Calu3 (cell line): ENCODE measurements at regions of chrX and their contacts with region 1.

Region 1: DNA sequence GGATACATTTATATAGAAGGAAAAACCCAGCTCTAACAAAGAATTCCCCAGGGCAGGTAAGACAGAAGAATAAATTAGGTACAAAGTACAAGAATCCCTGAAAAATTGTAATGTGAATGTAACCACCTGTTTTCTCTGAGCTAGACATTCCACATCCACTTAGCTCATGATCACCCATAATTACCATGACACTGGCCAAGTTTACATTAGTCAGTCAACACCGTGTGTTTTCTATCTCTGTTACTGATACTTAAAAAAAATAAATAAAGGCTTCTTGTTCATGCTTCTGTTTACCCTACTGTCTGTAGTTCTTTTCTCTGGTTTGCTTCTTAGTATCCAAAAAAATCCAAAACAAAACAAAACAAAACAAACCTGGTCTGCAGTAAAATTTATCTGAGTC is 66.0 kb downstream of the CBLL2 start:
- DNase-seq: no peak
- H3K4me3 Mint-ChIP-seq: no peak overlapping the region
- H3K27ac Mint-ChIP-seq: no peak overlapping the region
- H3K4me1 Mint-ChIP-seq: no peaks in the 10 kb centered on the region
- H3K27me3 Mint-ChIP-seq: no peaks in the 10 kb centered on the region
- CTCF ChIP-seq: no peak

Region 2: GRCh38 chrX:22351966-22352365 is 13.2 kb after region 1 on chrX:
- CTCF ChIA-PET with region 1: no interaction called
- intact Hi-C with region 1: loop called (anchors 1 kb)
- DNase-seq: no peak
- H3K4me3 Mint-ChIP-seq: no peak overlapping the region
- H3K27ac Mint-ChIP-seq: no peak overlapping the region
- H3K4me1 Mint-ChIP-seq: no peaks in the 10 kb centered on the region
- H3K27me3 Mint-ChIP-seq: no peaks in the 10 kb centered on the region
- CTCF ChIP-seq: no peak